ENCODE measurements at regions of chr7 and their contacts with region 1.

Region 1: GRCh38 chr7:144391823-144392255 is 11.7 kb downstream of the NOBOX start:
- DNase-seq: peak; percentile 80
- H3K4me3 Mint-ChIP-seq: no peak overlapping the region
- H3K27ac Mint-ChIP-seq: no peak overlapping the region
- H3K4me1 Mint-ChIP-seq: peaks cover 2% of the 10 kb centered on the region
- H3K27me3 Mint-ChIP-seq: peaks cover 5% of the 10 kb centered on the region

Region 2: DNA sequence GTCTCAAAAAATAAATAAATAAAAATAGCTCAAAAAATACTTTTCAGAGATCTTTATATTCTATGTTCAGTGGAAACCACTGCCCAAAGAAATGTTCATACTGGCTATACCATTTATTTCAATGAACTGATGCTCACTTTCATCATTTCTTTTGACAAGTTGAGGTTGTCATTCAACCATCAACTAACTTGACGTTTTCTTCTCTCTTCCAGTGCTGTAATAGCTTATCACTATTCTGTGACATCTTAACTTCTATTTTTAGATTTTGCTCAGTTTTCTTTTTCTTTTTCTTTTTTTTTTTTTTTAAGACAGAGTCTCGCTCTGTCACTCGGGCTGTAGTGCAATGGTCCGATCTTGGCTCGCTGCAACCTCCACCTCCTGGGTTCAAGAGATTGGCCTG is 217.2 kb before region 1 on chr7:
- intact Hi-C with region 1: loop called (anchors 5 kb)
- DNase-seq: no peak
- H3K4me3 Mint-ChIP-seq: no peak overlapping the region
- H3K27ac Mint-ChIP-seq: no peak overlapping the region
- H3K4me1 Mint-ChIP-seq: peaks cover 1% of the 10 kb centered on the region
- H3K27me3 Mint-ChIP-seq: peaks cover 29% of the 10 kb centered on the region

Measured in activated CD4-positive, alpha-beta T cell treated with anti-CD3 and anti-CD28 coated beads, Interleukin-2, amount 10 ng/mL, durations not matched to agents 24 days and 14 days (primary cell).